ENCODE measurements at regions of chr12 and their contacts with region 1.

Region 1: GRCh38 chr12:6069437-6070107 is 54.9 kb downstream of the VWF start:
- DNase-seq: peak in 1 of 2 donors; percentile 64
- ATAC-seq: peak; percentile 49
- H3K4me3 ChIP-seq: no peak overlapping the region
- H3K27ac ChIP-seq: no peak overlapping the region
- H3K4me1 ChIP-seq: no peaks in the 10 kb centered on the region
- H3K27me3 ChIP-seq: no peaks in the 10 kb centered on the region

Region 2: DNA sequence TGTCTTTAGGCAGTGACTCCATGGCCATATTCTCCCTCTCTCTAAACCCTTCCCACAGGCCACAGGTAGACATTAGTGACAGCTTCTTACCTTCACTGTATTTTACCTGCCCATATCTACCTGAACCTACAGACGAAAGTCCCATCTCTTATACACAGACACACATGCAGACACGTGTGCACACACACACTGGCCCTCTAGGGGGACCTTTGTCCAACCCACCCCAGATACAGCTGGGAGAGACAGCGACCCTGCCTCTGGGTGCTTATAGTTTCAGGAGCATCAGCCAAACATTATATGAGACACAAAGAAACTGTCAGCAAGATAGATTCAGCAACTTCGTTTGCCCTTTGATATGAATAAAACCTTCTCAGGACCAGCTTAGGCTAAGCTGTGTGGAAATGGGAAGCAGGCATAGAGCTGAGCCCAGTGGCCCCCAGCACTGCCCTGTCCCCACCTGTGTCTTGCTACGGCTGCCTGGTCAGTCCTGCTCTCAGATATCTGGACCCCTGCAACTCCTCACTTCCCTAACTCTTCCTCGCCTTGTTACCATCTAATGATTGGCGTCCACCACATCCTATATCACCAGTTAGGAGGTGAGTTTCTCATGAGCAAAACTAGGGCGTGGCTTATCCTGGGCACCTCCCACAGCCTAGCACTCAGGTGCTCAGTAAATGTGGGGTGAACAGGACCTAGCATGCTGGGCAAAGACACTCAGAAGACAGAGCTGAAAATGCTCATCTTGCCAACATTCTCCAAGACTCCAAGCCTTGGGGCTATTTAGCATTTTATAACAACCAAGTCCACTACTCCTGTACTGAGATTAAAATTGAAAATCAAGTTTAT is 118.6 kb after region 1 on chr12:
- intact Hi-C with region 1: loop called in 1 of 2 experiments (anchors 5 kb)
- DNase-seq: peak; percentile 18 to 28
- ATAC-seq: no peak
- H3K4me3 ChIP-seq: no peak overlapping the region
- H3K27ac ChIP-seq: peak overlapping the region; percentile 84 to 89
- H3K4me1 ChIP-seq: peaks cover 0 to 5% of the 10 kb centered on the region in 2 donors
- H3K27me3 ChIP-seq: no peaks in the 10 kb centered on the region